SK-N-SH (cell line): ENCODE measurements at regions of chr11 and their contacts with region 1.

Region 1: DNA sequence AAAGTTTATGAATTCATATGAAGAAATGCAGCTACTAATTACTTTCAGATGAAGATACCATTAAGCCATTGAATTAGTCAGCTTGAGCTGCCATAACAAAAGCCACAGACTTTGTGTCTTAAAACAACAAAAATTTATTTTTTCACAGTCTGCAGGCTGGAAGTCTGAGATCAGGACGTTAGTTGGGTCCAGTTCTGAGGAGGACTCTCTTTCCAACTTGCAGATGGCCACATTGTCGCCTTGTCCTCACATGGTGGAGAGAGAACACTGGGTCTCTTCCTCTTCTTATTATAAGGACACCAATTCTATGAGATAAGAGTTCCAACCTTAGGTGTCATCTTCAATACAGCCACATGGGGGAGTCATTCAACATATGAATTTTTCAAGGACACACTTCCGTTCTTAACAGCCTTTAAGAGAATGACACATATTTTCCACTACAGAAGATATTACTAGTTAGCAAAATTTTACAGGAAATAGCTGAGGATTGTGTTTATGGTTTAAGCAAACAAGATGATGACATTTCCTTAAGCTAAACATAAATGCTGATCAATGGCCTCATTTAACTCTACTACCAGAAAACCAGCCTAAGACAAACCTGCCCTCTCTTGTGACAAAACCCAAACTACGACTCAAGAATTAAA is 56.0 kb downstream of the DCUN1D5 start:
- DNase-seq: peak; percentile 43
- H3K4me3 ChIP-seq: no peak overlapping the region
- H3K27ac ChIP-seq: peak overlapping the region; percentile 34; a peak in 2 of 4 replicates
- H3K4me1 ChIP-seq: peaks cover 0 to 4% of the 10 kb centered on the region in 2 experiments; a peak in 2 of 4 replicates
- H3K27me3 ChIP-seq: no peaks in the 10 kb centered on the region
- CTCF ChIP-seq: peak; percentile 70
- EP300 ChIP-seq: no peak
- RAD21 ChIP-seq: peak; percentile 67

Region 2: DNA sequence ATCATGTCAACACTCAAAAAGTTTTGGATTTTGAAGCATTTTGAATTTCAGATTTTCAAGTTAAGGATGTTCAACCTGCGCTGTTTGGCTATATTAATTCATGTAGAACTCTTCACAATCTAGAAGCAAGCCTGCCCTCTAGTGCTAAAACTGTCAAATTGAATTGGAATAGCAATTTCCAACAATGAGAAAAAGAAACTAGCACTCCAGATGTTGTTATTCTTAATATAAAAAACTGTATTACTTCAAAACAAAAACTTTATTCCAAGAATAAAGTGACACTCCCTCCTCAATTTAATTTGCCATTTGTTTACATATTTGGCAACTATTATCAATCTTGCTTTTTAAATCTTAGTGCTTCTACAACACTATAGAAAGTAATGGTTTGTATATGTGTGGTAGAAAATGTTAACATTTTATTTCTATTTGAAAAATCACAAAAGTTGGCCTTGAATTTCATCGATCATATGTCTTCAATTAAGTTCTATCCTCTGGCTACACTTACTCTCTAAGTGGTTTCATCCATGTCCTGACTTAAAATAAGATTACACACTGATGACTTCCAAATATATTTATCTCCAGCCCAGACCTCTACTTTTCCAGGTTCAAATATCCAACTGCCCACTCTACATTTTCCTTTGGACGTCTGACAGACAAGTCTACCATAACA is 19.4 kb after region 1 on chr11:
- CTCF ChIA-PET with region 1: interaction called, 15 read pairs
- POLR2A ChIA-PET with region 1: no interaction called
- DNase-seq: peak; percentile 12
- H3K4me3 ChIP-seq: no peak overlapping the region
- H3K27ac ChIP-seq: peak overlapping the region in 1 of 2 experiments; percentile 74; a peak in 3 of 4 replicates
- H3K4me1 ChIP-seq: peaks cover 0 to 5% of the 10 kb centered on the region in 2 experiments; a peak in 1 of 4 replicates
- H3K27me3 ChIP-seq: no peaks in the 10 kb centered on the region
- CTCF ChIP-seq: peak; percentile 82
- EP300 ChIP-seq: no peak
- RAD21 ChIP-seq: peak; percentile 73